GM12878 (cell line): ENCODE measurements at regions of chr5 and their contacts with region 1.

Region 1: GRCh38 chr5:138138949-138139780 is at the start of gene NME5:
- DNase-seq: peak; percentile 5
- ATAC-seq: peak; percentile 96
- H3K4me3 ChIP-seq: peak within 1 kb of the TSS; percentile 71
- H3K27ac ChIP-seq: no peak within 1 kb of the TSS
- H3K4me1 ChIP-seq: no peaks in the 10 kb centered on the region
- H3K27me3 ChIP-seq: no peaks in the 10 kb centered on the region
- CTCF ChIP-seq: no peak
- EP300 ChIP-seq: no peak
- POLR2A ChIP-seq: no peak
- RAD21 ChIP-seq: no peak
- polyA plus RNA-seq, gene NME5: 0.22 TPM in 1 of 2 experiments, not detected in the other

Region 2: GRCh38 chr5:137051165-137051564 is 1088.0 kb before region 1 on chr5:
- CTCF ChIA-PET with region 1: no interaction called
- POLR2A ChIA-PET with region 1: no interaction called
- RAD21 ChIA-PET with region 1: no interaction called
- SMC1A ChIA-PET with region 1: no interaction called
- in situ Hi-C with region 1: no loop called
- intact Hi-C with region 1: no loop called
- DNase-seq: no peak
- ATAC-seq: no peak
- H3K4me3 ChIP-seq: no peak overlapping the region
- H3K27ac ChIP-seq: no peak overlapping the region
- H3K4me1 ChIP-seq: no peaks in the 10 kb centered on the region
- H3K27me3 ChIP-seq: no peaks in the 10 kb centered on the region
- CTCF ChIP-seq: no peak
- EP300 ChIP-seq: no peak
- POLR2A ChIP-seq: no peak
- RAD21 ChIP-seq: no peak

Region 3: GRCh38 chr5:138083702-138084101 is 55.5 kb before region 1 on chr5 and contains the start of gene WNT8A:
- CTCF ChIA-PET with region 1: interaction called, 243 read pairs
- POLR2A ChIA-PET with region 1: interaction called, 3 read pairs
- RAD21 ChIA-PET with region 1: interaction called, 59 read pairs
- SMC1A ChIA-PET with region 1: interaction called, 87 read pairs
- in situ Hi-C with region 1: loop called (anchors 10 kb)
- intact Hi-C with region 1: no loop called
- DNase-seq: no peak
- ATAC-seq: no peak
- H3K4me3 ChIP-seq: no peak within 1 kb of the TSS
- H3K27ac ChIP-seq: no peak within 1 kb of the TSS
- H3K4me1 ChIP-seq: peaks cover 7% of the 10 kb centered on the region
- H3K27me3 ChIP-seq: no peaks in the 10 kb centered on the region
- CTCF ChIP-seq: no peak
- EP300 ChIP-seq: no peak
- POLR2A ChIP-seq: no peak
- RAD21 ChIP-seq: no peak
- polyA plus RNA-seq, gene WNT8A: not detected